PC-3 (cell line): ENCODE measurements at regions of chr11 and their contacts with region 1.

Region 1: GRCh38 chr11:121112498-121113455 is 11.7 kb downstream of the TECTA start:
- DNase-seq: peak; percentile 87
- ATAC-seq: peak; percentile 97
- H3K4me3 ChIP-seq: no peak overlapping the region
- H3K27ac ChIP-seq: no peak overlapping the region
- H3K4me1 ChIP-seq: no peaks in the 10 kb centered on the region
- H3K27me3 ChIP-seq: peaks cover 57% of the 10 kb centered on the region
- CTCF ChIP-seq: peak; percentile 89

Region 2: DNA sequence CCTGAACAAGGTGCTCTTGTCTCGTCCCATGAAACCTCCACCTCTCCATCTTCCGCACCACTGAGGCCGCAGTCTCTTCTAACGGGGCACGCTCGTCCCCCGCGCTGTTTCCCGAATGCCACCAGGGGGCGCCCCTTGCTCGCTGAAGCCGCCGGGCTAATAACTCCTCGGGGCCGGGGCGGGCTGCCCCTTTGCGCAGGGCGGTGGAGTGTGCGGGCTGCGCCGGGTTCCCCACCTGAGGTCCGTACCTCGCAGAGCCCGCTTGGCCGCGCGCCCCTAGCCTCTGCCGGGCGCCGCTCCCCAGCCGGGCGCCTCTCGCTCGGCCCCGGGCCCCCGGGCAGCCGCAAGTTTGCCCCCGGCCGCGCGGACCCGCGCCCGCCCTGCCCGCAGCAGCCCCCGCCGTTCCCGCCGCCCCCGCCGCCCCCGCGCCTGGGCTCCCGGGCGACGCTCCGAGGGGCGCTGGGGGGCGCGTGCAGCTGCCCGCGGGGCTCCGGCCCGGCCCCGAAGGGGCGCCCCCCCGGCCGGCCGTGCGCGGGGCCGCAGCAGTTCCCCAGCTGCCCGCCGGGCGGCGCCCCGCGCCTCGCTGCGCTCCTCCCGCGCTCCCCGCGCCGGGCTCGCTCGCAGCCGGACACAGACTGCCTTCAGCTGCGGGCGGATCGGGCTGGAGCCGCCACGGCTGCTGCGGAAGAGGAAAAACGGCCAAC is 601.5 kb before region 1 on chr11 and contains the start of gene GRIK4:
- CTCF ChIA-PET with region 1: no interaction called
- POLR2A ChIA-PET with region 1: no interaction called
- intact Hi-C with region 1: loop called (anchors 2 kb)
- DNase-seq: peak; percentile 80
- ATAC-seq: peak; percentile 90
- H3K4me3 ChIP-seq: peak within 1 kb of the TSS; percentile 51; the same call in 1 of the 2 replicates
- H3K27ac ChIP-seq: no peak within 1 kb of the TSS
- H3K4me1 ChIP-seq: no peaks in the 10 kb centered on the region
- H3K27me3 ChIP-seq: peaks cover 67% of the 10 kb centered on the region
- CTCF ChIP-seq: peak; percentile 95
- total RNA-seq, gene GRIK4: not detected in 2 replicates

Region 3: GRCh38 chr11:120688163-120688562 is 424.6 kb before region 1 on chr11:
- CTCF ChIA-PET with region 1: no interaction called
- POLR2A ChIA-PET with region 1: no interaction called
- intact Hi-C with region 1: loop called (anchors 5 kb)
- DNase-seq: no peak
- ATAC-seq: no peak
- H3K4me3 ChIP-seq: no peak overlapping the region
- H3K27ac ChIP-seq: no peak overlapping the region
- H3K4me1 ChIP-seq: no peaks in the 10 kb centered on the region
- H3K27me3 ChIP-seq: peaks cover 75% of the 10 kb centered on the region
- CTCF ChIP-seq: no peak

Region 4: DNA sequence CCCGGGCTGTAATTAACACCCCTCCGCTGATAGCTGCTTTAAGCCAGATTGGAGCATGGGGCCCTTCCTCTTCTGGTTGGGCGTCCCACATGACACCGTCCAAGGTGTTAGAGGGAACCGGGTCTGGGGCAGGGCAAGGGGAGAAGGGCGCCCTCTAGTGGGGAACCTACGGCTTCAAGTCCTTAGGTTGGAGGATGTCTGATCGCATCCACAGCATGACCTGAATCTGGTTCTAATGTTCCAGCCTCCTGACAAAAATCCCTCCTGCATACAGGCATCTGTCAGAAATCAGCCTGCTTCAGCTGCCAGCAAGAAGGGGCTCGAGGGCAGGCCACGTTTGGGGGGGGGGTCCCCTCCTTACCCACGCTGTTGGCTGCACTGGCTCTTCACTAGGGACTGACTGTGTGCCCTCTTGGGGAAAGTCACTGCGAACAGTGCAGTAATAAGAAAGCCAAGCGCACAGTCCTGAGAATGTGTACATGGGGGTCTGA is 183.1 kb before region 1 on chr11:
- CTCF ChIA-PET with region 1: no interaction called
- POLR2A ChIA-PET with region 1: no interaction called
- intact Hi-C with region 1: loop called (anchors 1 kb)
- DNase-seq: peak; percentile 50
- ATAC-seq: peak; percentile 76
- H3K4me3 ChIP-seq: no peak overlapping the region
- H3K27ac ChIP-seq: no peak overlapping the region
- H3K4me1 ChIP-seq: no peaks in the 10 kb centered on the region
- H3K27me3 ChIP-seq: peaks cover 6% of the 10 kb centered on the region; the same call in 1 of the 2 replicates
- CTCF ChIP-seq: peak; percentile 92

Region 5: DNA sequence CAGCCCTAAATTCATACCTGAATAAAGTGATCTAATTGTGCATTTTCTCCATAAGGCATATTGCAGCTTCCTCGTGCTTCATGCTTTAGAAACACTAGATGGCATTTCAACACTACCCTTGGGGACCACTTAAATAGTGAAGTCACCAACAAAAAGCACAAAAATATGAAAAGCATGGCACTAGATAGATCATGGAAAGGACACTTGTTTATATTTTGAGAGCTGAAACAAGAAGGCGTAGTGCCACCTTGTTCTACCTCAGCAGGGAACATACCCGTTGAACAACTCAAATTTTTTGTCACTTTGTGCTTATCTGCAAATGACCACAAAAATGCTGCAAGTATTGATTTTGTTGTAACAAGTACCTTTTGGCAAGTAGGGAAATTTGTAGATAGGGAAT is 80.2 kb before region 1 on chr11:
- CTCF ChIA-PET with region 1: no interaction called
- POLR2A ChIA-PET with region 1: no interaction called
- intact Hi-C with region 1: loop called (anchors 1 kb)
- DNase-seq: peak; percentile 21
- ATAC-seq: peak; percentile 33; the same call in 1 of the 2 replicates
- H3K4me3 ChIP-seq: no peak overlapping the region
- H3K27ac ChIP-seq: no peak overlapping the region
- H3K4me1 ChIP-seq: peaks cover 10% of the 10 kb centered on the region
- H3K27me3 ChIP-seq: no peaks in the 10 kb centered on the region
- CTCF ChIP-seq: peak; percentile 56

Region 6: GRCh38 chr11:121180183-121180582 is 67.4 kb after region 1 on chr11:
- CTCF ChIA-PET with region 1: no interaction called
- POLR2A ChIA-PET with region 1: no interaction called
- intact Hi-C with region 1: no loop called
- DNase-seq: no peak
- ATAC-seq: no peak
- H3K4me3 ChIP-seq: no peak overlapping the region
- H3K27ac ChIP-seq: no peak overlapping the region
- H3K4me1 ChIP-seq: no peaks in the 10 kb centered on the region
- H3K27me3 ChIP-seq: peaks cover 9% of the 10 kb centered on the region; the same call in 1 of the 2 replicates
- CTCF ChIP-seq: no peak

Region 7: DNA sequence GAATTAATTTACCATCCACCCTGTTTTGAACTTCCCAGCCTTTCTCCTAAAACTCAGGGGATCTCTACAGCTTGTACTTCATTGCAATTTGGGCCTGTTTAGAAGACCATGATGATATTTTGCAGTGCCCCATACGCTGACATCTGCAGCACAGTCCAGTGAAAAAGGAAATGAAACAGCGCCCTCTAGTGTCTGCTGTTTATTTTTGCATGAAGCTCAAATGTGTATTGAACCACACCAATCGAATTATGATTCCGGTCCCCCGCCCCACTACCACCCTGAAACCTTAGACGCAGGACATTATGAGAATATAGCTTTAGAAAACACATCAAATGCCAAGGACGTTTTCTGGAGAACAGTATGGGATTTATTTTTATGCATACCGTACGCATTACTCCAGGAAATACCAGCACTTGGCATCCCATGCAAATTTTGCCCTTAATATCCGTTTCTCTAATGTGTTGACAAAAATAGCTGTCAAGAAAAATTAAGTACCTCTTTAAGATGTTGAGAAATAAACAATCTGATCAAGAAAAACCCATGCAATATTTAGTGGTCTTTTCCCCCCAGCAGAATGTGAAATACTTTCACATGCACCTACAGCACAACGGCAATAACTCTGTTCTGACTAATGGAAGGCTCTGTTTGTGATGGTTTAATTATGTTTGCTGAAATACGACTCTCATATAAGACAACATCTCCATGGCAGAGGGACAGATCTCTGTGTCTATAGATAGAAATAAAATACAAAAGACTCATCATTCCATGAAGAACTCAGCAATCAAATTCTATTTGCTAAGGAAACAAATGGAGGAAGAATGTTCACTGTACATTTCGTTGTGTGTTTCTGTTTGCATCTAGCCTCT is 82.2 kb after region 1 on chr11:
- CTCF ChIA-PET with region 1: no interaction called
- POLR2A ChIA-PET with region 1: no interaction called
- intact Hi-C with region 1: loop called (anchors 2 kb)
- DNase-seq: peak; percentile 91
- ATAC-seq: peak; percentile 97
- H3K4me3 ChIP-seq: peak overlapping the region; percentile 49
- H3K27ac ChIP-seq: no peak overlapping the region
- H3K4me1 ChIP-seq: peaks cover 6% of the 10 kb centered on the region; the same call in 1 of the 2 replicates
- H3K27me3 ChIP-seq: peaks cover 28% of the 10 kb centered on the region
- CTCF ChIP-seq: peak; percentile 96